ENCODE measurements at regions of chr6 and their contacts with region 1.

Region 1: DNA sequence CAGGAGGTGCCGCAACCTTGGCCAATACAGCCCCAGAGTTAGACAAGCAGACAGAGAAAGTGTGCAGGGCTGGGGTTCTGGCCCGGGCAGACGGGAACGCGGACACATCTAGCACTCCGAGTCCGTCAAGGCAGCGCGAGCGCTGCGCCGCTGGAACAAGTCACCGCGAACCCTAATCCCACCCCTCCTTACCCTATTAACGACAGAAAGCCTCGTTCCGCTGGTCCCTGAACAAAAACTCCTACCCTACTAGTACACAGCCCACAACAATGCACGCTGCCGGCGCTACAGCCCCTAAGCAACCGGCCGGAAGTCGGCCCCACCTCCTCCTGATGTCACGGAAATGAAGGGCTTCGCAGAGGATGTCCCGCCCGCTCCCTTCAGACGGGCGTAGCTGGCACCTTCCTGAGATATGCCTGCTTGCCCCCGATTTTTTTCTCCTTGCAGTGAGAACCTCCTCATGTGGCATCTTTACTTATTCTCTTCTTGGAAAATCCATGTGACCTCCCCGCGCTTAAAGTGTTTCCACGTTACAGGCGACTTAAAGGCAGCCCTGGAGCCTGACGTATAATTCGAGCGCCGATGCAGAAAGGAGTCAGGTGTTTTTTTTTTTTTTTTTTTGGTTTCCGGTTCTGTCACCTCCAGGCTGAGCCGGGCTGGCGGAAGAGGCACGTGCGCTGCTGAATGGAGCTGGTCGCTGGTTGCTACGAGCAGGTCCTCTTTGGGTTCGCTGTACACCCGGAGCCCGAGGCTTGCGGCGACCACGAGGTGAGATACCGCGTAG is at the starts of genes C6orf52 and PAK1IP1:
- DNase-seq: peak; percentile 93 to 96 (median 94)
- ATAC-seq: peak; percentile 99 to 100 (median 100)
- H3K4me3 ChIP-seq: peak within 1 kb of the TSS; percentile 59 to 92 (median 77)
- H3K27ac ChIP-seq: peak within 1 kb of the TSS; percentile 82 to 98 (median 96)
- H3K4me1 ChIP-seq: peaks cover 0 to 32% (median 18%) of the 10 kb centered on the region in 12 donors
- H3K27me3 ChIP-seq: no peaks in the 10 kb centered on the region
- CTCF ChIP-seq: no peak
- POLR2A ChIP-seq: peak; percentile 23 to 84
- total RNA-seq, gene C6orf52: 0.71 to 3.6 (median 1.5) TPM in 3 of 9 donors, not detected in the others
- total RNA-seq, gene PAK1IP1: 6.1 to 12.7 (median 8.7) TPM

Region 2: GRCh38 chr6:10505529-10505928 is 189.0 kb before region 1 on chr6:
- intact Hi-C with region 1: loop called in 9 of 10 experiments (anchors 1 to 10 kb)
- DNase-seq: no peak
- ATAC-seq: no peak
- H3K4me3 ChIP-seq: no peak overlapping the region
- H3K27ac ChIP-seq: no peak overlapping the region
- H3K4me1 ChIP-seq: peaks cover 0 to 3% (median 0%) of the 10 kb centered on the region in 12 donors
- H3K27me3 ChIP-seq: peaks cover 0 to 6% (median 0%) of the 10 kb centered on the region in 9 donors
- CTCF ChIP-seq: no peak
- POLR2A ChIP-seq: no peak

Region 3: DNA sequence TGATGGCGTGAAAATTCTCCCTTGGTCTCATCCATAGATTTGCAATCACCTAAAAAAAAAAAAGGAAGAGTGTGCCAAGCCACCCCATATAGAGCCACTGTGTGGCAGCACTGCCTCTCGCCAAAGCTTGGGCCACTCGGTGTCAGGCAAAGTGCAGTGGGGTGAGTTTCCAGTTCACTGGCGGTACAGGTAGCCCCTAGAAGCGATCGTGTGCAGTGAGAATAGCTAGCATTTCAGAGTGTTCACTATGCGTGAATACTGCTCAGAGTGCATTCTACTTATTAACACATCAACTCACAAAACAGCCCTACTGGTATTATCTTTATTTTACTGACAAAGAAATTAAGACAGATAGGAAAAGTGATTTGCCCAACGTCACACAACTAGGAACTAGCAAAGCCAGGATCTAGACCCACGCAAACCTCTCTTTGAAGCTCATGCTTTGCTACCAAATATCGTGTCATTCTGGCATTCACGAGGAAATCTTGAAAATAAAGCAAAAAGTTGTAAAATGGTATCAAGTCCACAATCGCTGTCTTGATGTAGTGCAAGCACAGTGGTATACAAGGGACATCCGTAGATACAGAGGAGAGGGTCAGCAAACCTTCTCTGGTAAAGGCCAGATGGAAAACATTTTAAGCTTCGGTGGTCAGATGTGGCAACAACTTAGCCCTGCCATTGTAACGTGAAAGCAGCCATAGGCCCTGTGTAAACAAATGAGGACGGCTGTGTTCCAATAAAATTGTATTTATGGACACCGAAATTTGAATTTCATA is 183.7 kb before region 1 on chr6:
- intact Hi-C with region 1: loop called (anchors 1 to 10 kb)
- DNase-seq: peak; percentile 64 to 81 (median 75)
- ATAC-seq: peak; percentile 91 to 96 (median 92)
- H3K4me3 ChIP-seq: peak overlapping the region in 6 of 12 donors; percentile 7 to 29 (median 14)
- H3K27ac ChIP-seq: peak overlapping the region; percentile 64 to 95 (median 81)
- H3K4me1 ChIP-seq: peaks cover 0 to 16% (median 0%) of the 10 kb centered on the region in 12 donors
- H3K27me3 ChIP-seq: no peaks in the 10 kb centered on the region
- CTCF ChIP-seq: peak; percentile 49 to 75 (median 58)
- POLR2A ChIP-seq: peak in 1 of 2 donors; percentile 6

Region 4: GRCh38 chr6:10722820-10723566 is 28.5 kb after region 1 on chr6 and contains the start of gene TMEM14C:
- intact Hi-C with region 1: loop called in 4 of 10 experiments (anchors 1 to 2 kb)
- DNase-seq: peak; percentile 99 to 100 (median 99)
- ATAC-seq: peak; percentile 99 to 100 (median 99)
- H3K4me3 ChIP-seq: peak within 1 kb of the TSS; percentile 35 to 88 (median 72)
- H3K27ac ChIP-seq: peak within 1 kb of the TSS; percentile 19 to 94 (median 89)
- H3K4me1 ChIP-seq: peaks cover 0 to 48% (median 31%) of the 10 kb centered on the region in 12 donors
- H3K27me3 ChIP-seq: no peaks in the 10 kb centered on the region
- CTCF ChIP-seq: no peak
- POLR2A ChIP-seq: peak in 1 of 2 donors; percentile 80
- total RNA-seq, gene TMEM14C: 94.5 to 142 (median 115) TPM

Region 5: GRCh38 chr6:10747251-10747972 is 52.9 kb after region 1 on chr6 and contains the start of gene TMEM14B:
- intact Hi-C with region 1: loop called in 7 of 10 experiments (anchors 1 to 10 kb)
- DNase-seq: peak; percentile 100
- ATAC-seq: peak; percentile 99 to 100 (median 100)
- H3K4me3 ChIP-seq: peak within 1 kb of the TSS; percentile 57 to 89 (median 79)
- H3K27ac ChIP-seq: peak within 1 kb of the TSS; percentile 29 to 88 (median 83)
- H3K4me1 ChIP-seq: peaks cover 0 to 40% (median 27%) of the 10 kb centered on the region in 12 donors
- H3K27me3 ChIP-seq: no peaks in the 10 kb centered on the region
- CTCF ChIP-seq: peak in 1 of 12 donors; percentile 6
- POLR2A ChIP-seq: no peak
- total RNA-seq, gene TMEM14B: 77.9 to 119 (median 102) TPM

Region 6: GRCh38 chr6:10771371-10771894 is 76.9 kb after region 1 on chr6:
- intact Hi-C with region 1: no loop called
- DNase-seq: no peak
- ATAC-seq: no peak
- H3K4me3 ChIP-seq: no peak overlapping the region
- H3K27ac ChIP-seq: no peak overlapping the region
- H3K4me1 ChIP-seq: no peaks in the 10 kb centered on the region
- H3K27me3 ChIP-seq: no peaks in the 10 kb centered on the region
- CTCF ChIP-seq: no peak
- POLR2A ChIP-seq: no peak